ENCODE measurements at regions of chr2 and their contacts with region 1.

Region 1: GRCh38 chr2:112683538-112684414 is 37.0 kb upstream of the NT5DC4 start:
- DNase-seq: no peak
- ATAC-seq: no peak
- H3K4me3 ChIP-seq: no peak overlapping the region
- H3K27ac ChIP-seq: no peak overlapping the region
- H3K4me1 ChIP-seq: peaks cover 25% of the 10 kb centered on the region
- H3K27me3 ChIP-seq: no peaks in the 10 kb centered on the region
- CTCF ChIP-seq: no peak

Region 2: DNA sequence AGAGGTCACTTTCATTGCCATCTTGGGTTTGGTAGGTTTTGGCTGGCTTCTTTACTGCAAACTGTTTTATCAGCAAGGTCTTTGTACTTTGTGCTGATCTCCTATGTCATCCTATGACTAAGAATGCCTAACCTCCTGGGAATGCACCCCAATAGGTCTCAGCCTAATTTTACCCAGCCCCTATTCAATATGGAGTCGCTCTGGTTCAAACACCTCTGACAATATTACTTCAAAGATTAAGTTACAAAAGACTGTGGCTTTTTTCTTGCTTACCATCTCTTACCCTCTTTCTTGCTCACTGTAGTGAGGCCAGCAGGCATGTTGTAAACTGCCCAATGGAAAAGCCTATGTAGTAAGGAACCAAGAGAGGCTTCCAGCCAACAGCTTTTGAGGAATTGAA is 232.5 kb before region 1 on chr2:
- intact Hi-C with region 1: no loop called
- DNase-seq: no peak
- ATAC-seq: no peak
- H3K4me3 ChIP-seq: no peak overlapping the region
- H3K27ac ChIP-seq: no peak overlapping the region
- H3K4me1 ChIP-seq: no peaks in the 10 kb centered on the region
- H3K27me3 ChIP-seq: no peaks in the 10 kb centered on the region
- CTCF ChIP-seq: no peak

Region 3: DNA sequence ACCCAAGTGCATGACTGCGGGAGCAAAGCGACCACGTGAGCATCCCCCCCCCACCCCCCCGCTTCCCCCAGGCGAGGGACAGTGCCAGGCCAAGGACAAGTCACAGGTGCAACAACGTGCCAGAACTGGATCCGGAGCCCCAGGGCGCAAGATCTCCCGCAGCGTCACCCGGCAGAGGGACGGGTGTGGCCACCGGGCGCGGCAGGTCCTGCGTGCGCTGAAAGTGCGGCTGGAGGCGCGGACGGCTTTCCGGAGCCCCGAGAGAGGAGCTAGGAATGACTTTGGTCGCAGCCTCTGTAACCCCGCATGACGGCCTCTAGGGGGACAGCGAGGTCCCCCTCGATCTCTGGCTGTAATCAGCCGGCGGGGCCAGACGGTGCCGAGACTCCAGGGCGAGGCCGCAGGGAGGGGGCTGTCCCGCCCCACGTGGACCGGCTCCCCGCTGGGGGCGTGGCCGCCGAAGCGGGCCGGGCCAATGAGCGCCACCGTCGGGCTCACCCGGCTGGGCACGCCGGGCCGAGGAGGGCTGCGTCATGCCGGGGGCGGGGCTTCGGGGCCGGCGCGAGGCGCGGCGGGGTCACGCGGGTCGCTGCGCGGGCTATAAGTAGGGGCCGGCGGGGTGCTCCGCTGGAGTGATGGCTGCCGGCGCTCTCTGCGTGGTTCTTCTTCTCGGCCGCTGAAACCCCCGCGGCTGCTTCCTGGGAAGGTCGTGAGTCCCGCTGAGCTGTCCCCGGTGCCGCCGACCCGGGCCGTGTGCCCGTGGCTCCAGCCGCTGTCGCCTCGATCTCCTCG is 38.3 kb before region 1 on chr2 and contains the start of gene SLC20A1:
- intact Hi-C with region 1: loop called in 1 of 2 experiments (anchors 5 kb)
- DNase-seq: peak; percentile 97 to 99
- ATAC-seq: peak; percentile 97 to 98 (median 98)
- H3K4me3 ChIP-seq: peak within 1 kb of the TSS; percentile 99
- H3K27ac ChIP-seq: peak within 1 kb of the TSS; percentile 95
- H3K4me1 ChIP-seq: peaks cover 38% of the 10 kb centered on the region
- H3K27me3 ChIP-seq: no peaks in the 10 kb centered on the region
- CTCF ChIP-seq: peak; percentile 38
- total RNA-seq, gene SLC20A1: 11.8 to 23.6 (median 17.8) TPM

Region 4: GRCh38 chr2:112811841-112812306 is 128.1 kb after region 1 on chr2:
- intact Hi-C with region 1: no loop called
- DNase-seq: no peak
- ATAC-seq: peak; percentile 23 to 64 (median 58)
- H3K4me3 ChIP-seq: no peak overlapping the region
- H3K27ac ChIP-seq: no peak overlapping the region
- H3K4me1 ChIP-seq: peaks cover 5% of the 10 kb centered on the region
- H3K27me3 ChIP-seq: no peaks in the 10 kb centered on the region
- CTCF ChIP-seq: no peak

Measured in psoas muscle (tissue), 8 donors.